Adrenal gland (tissue), 19 donors: ENCODE measurements at regions of chr6 and their contacts with region 1.

Region 1: GRCh38 chr6:18122124-18123093 is at the start of gene NHLRC1:
- DNase-seq: peak; percentile 90 to 96 (median 93)
- H3K4me3 ChIP-seq: peak within 1 kb of the TSS in 2 of 4 donors; percentile 31 to 46
- H3K27ac ChIP-seq: peak within 1 kb of the TSS in 3 of 5 donors; percentile 35 to 51 (median 42)
- H3K4me1 ChIP-seq: peaks cover 5 to 6% of the 10 kb centered on the region in 2 donors
- H3K27me3 ChIP-seq: no peaks in the 10 kb centered on the region
- CTCF ChIP-seq: peak; percentile 93 to 98 (median 94)
- POLR2A ChIP-seq: peak; percentile 19 to 60
- total RNA-seq, gene NHLRC1: 2.2 to 4.3 (median 3.2) TPM

Region 2: GRCh38 chr6:17584241-17584803 is 538.1 kb before region 1 on chr6:
- intact Hi-C with region 1: loop called in 1 of 2 experiments (anchors 10 kb)
- DNase-seq: peak; percentile 44 to 63 (median 51)
- H3K4me3 ChIP-seq: peak overlapping the region in 1 of 4 donors; percentile 9
- H3K27ac ChIP-seq: peak overlapping the region in 3 of 5 donors; percentile 30 to 40 (median 33)
- H3K4me1 ChIP-seq: peaks cover 0 to 5% of the 10 kb centered on the region in 2 donors
- H3K27me3 ChIP-seq: no peaks in the 10 kb centered on the region
- CTCF ChIP-seq: peak; percentile 76 to 99 (median 90)
- POLR2A ChIP-seq: no peak

Region 3: DNA sequence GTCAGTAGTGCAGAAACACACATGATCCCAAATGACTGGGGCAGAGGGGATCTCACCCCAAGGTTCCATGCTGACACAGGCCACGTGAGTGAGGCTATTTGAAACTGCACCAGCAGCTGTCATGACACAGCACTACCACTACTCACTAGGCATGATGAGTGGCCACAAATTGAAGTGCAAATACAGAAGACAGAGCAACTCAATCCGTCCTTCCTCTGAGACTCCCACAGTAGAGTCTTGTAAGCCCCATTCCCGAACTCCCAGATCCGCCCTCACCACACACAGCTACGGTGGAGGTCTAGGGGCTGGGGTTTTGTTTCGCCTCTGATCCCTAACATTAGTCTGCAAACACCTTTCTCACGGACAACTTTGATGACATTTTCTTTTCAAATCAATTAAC is 302.4 kb before region 1 on chr6:
- intact Hi-C with region 1: loop called (anchors 10 kb)
- DNase-seq: no peak
- H3K4me3 ChIP-seq: no peak overlapping the region
- H3K27ac ChIP-seq: no peak overlapping the region
- H3K4me1 ChIP-seq: no peaks in the 10 kb centered on the region
- H3K27me3 ChIP-seq: no peaks in the 10 kb centered on the region
- CTCF ChIP-seq: no peak
- POLR2A ChIP-seq: no peak

Region 4: DNA sequence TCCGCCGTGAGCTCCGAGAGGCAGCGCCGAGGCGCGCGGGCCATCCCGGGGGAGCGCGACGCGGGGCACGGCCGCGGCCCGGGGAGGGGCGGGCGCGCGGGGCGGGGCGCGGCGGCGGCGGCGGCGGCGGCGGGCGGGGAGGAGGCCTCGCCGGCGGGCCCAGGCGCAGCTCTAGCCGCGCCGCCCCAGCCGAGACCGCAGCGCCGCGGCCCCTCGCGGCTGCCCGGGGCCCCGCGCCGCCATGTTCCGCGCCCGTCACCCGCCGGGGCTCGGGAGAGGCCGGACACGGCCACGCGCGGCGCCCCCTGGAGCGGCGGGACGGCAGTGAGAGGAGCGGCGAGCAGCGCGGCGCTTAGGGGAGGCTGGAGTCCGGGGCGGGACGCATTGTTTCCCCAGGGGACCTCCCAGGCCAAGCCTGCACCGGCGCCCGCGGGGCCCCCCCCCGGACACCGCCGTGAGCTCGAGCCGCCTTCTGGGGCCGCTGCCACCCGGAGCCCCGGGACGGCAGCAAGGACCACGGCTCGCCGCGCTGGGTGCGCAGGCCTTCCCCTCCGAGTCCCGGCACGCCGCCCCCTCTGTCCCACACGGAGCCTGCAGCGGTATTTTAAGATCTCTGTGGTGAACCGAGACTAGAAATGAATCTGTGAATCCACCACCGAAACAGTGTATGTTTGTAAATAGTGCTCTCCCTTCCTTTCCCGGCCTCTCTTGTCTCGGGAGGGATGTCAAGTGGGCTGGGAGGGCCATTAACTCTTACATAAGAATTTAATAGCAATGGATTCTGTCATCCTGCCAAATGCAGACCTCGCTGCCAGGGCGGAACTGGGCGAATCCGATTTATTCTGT is 134.6 kb before region 1 on chr6 and contains the start of gene KIF13A:
- intact Hi-C with region 1: loop called in 1 of 2 experiments (anchors 5 kb)
- DNase-seq: peak; percentile 71 to 88 (median 73)
- H3K4me3 ChIP-seq: peak within 1 kb of the TSS; percentile 27 to 87 (median 62)
- H3K27ac ChIP-seq: peak within 1 kb of the TSS; percentile 77 to 99 (median 97)
- H3K4me1 ChIP-seq: peaks cover 24 to 39% of the 10 kb centered on the region in 2 donors
- H3K27me3 ChIP-seq: no peaks in the 10 kb centered on the region
- CTCF ChIP-seq: peak in 4 of 6 experiments; percentile 27 to 46 (median 35)
- POLR2A ChIP-seq: peak; percentile 39 to 70
- total RNA-seq, gene KIF13A: 22.0 to 91.6 (median 53.5) TPM

Region 5: GRCh38 chr6:18053078-18053477 is 69.3 kb before region 1 on chr6:
- intact Hi-C with region 1: no loop called
- DNase-seq: no peak
- H3K4me3 ChIP-seq: no peak overlapping the region
- H3K27ac ChIP-seq: no peak overlapping the region
- H3K4me1 ChIP-seq: peaks cover 4 to 6% of the 10 kb centered on the region in 2 donors
- H3K27me3 ChIP-seq: no peaks in the 10 kb centered on the region
- CTCF ChIP-seq: no peak
- POLR2A ChIP-seq: no peak